SK-N-SH (cell line): ENCODE measurements at regions of chr10 and their contacts with region 1.

Region 1: GRCh38 chr10:12782537-12782936 is 219.0 kb downstream of the CCDC3 start:
- DNase-seq: peak; percentile 64
- H3K4me3 ChIP-seq: peak overlapping the region in 1 of 2 experiments; percentile 26; a peak in 1 of 4 replicates
- H3K27ac ChIP-seq: no peak overlapping the region; a peak in 1 of 4 replicates
- H3K4me1 ChIP-seq: peaks cover 0 to 8% of the 10 kb centered on the region in 2 experiments; a peak in 2 of 4 replicates
- H3K27me3 ChIP-seq: no peaks in the 10 kb centered on the region
- CTCF ChIP-seq: peak; percentile 75
- EP300 ChIP-seq: no peak
- RAD21 ChIP-seq: peak; percentile 59

Region 2: GRCh38 chr10:12419262-12419847 is 363.2 kb before region 1 on chr10:
- CTCF ChIA-PET with region 1: no interaction called
- POLR2A ChIA-PET with region 1: no interaction called
- DNase-seq: no peak
- H3K4me3 ChIP-seq: no peak overlapping the region
- H3K27ac ChIP-seq: peak overlapping the region in 1 of 2 experiments; percentile 80; a peak in 2 of 4 replicates
- H3K4me1 ChIP-seq: peaks cover 0 to 5% of the 10 kb centered on the region in 2 experiments; a peak in 1 of 4 replicates
- H3K27me3 ChIP-seq: no peaks in the 10 kb centered on the region
- CTCF ChIP-seq: no peak
- EP300 ChIP-seq: peak; percentile 20 to 87; a peak in 2 of 4 replicates
- RAD21 ChIP-seq: no peak

Region 3: DNA sequence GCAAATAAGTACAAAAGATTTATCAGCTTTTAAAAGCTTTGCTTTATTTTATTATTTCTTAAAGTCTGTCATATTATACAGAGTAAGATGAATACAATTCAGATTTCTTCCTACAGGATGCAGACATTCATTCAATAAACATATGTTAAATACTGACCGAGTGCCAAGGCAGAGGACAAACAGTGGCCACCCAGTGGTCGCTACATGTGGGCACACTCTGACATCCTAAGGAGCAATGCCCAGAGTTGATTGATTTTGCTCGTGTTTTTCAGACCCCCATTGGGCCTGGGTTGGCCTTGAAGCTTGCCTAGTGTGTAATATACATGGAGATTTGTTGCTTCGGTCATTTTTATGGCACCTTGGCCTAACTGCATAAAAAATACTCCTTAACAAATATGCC is 17.8 kb after region 1 on chr10:
- CTCF ChIA-PET with region 1: interaction called, 28 read pairs
- POLR2A ChIA-PET with region 1: no interaction called
- DNase-seq: no peak
- H3K4me3 ChIP-seq: no peak overlapping the region
- H3K27ac ChIP-seq: no peak overlapping the region
- H3K4me1 ChIP-seq: peaks cover 0 to 4% of the 10 kb centered on the region in 2 experiments; a peak in 2 of 4 replicates
- H3K27me3 ChIP-seq: no peaks in the 10 kb centered on the region
- CTCF ChIP-seq: peak; percentile 30
- EP300 ChIP-seq: no peak
- RAD21 ChIP-seq: 0 out of 2 replicates have a peak, but pooled peaks have one; percentile 3

Region 4: GRCh38 chr10:12806228-12807095 is 23.9 kb after region 1 on chr10:
- CTCF ChIA-PET with region 1: interaction called, 28 read pairs
- POLR2A ChIA-PET with region 1: no interaction called
- DNase-seq: peak; percentile 36
- H3K4me3 ChIP-seq: no peak overlapping the region
- H3K27ac ChIP-seq: no peak overlapping the region; a peak in 1 of 4 replicates
- H3K4me1 ChIP-seq: peaks cover 0 to 16% of the 10 kb centered on the region in 2 experiments; a peak in 1 of 4 replicates
- H3K27me3 ChIP-seq: no peaks in the 10 kb centered on the region
- CTCF ChIP-seq: no peak
- EP300 ChIP-seq: peak in 1 of 2 experiments; percentile 15; a peak in 1 of 4 replicates
- RAD21 ChIP-seq: no peak

Region 5: DNA sequence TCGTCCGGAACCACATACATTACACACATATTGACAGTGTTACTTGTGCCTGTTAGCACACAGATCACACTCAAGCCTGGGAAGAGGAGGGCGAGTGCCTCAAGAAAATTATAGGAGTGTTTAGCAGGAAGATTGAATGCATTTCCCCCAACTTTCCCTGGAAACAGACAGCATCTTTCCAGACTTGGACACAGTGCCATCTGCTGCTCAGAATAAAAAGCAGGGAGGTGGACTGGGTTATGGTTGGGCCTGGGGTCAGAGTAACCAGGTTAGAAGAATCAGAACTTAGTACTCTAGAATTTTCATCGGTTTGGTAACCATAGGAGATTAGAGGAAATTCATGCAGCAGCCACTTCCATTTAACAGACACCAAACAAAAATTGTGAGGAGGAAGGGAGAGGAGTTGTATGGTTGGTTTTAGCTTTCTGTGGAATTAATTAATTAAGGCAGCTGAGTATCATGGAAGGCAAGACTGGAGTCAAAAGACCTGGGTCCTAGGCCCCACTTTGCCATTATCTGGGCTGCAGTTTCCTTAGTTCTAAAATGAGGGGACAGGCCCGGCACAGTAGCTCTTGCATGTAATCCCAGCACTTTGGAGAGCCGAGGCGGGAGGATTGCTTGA is 274.0 kb after region 1 on chr10:
- CTCF ChIA-PET with region 1: interaction called, 11 read pairs
- POLR2A ChIA-PET with region 1: no interaction called
- DNase-seq: peak; percentile 64
- H3K4me3 ChIP-seq: no peak overlapping the region
- H3K27ac ChIP-seq: no peak overlapping the region
- H3K4me1 ChIP-seq: no peaks in the 10 kb centered on the region; a peak in 1 of 4 replicates
- H3K27me3 ChIP-seq: no peaks in the 10 kb centered on the region
- CTCF ChIP-seq: peak; percentile 42
- EP300 ChIP-seq: no peak
- RAD21 ChIP-seq: peak; percentile 70